ENCODE measurements at regions of chr14 and their contacts with region 1.

Region 1: DNA sequence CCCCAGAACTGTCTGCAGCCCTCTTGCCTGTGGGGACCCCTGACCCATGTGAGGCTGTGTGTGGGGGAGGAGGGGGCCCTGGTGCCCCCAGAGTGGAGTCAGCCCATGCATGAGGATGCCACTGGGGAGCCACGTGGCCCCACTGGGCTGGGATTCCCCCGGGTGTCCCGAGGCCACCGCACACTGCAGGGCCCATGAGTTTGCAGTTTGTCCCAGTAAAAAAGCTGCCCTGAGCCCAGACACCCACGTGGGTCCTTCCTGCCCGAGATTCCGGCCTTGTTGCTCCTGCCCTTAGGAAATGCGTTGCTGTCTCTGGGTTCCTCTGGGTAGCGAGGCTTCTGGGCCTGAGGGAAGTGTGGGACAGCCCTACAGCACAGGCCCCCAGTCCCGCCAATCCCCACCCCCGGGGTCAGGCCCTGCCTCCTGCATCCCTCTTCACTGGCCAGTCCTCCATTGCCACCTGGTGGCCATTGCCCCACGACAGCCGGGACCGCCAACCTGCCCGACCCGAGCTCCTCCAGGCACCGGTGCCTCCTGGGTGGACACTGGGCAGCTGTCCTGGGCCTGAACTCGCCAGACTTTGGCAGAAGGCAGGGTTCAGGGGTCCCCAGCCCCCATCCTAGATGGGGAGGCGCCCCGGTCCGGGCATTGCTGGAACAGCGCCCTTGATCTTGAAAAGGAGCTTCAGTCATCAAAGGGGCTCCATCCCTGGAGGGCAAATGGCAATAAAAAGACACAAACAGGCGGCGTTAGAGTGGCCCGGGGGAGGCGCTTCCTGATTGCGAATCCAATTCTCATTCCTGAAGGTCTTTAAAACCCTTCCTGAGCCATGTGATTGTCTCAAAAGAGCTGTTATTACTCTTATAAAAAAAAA is 15.6 kb upstream of the C14orf180 start:
- DNase-seq: peak; percentile 98
- H3K4me3 ChIP-seq: no peak overlapping the region; a peak in 1 of 4 replicates
- H3K27ac ChIP-seq: peak overlapping the region in 1 of 2 experiments; percentile 71; a peak in 2 of 4 replicates
- H3K4me1 ChIP-seq: peaks cover 0 to 65% of the 10 kb centered on the region in 2 experiments; a peak in 1 of 4 replicates
- H3K27me3 ChIP-seq: no peaks in the 10 kb centered on the region
- CTCF ChIP-seq: peak; percentile 78
- EP300 ChIP-seq: no peak
- RAD21 ChIP-seq: peak; percentile 94

Region 2: GRCh38 chr14:104094709-104095438 is 469.1 kb before region 1 on chr14:
- CTCF ChIA-PET with region 1: interaction called, 32 read pairs
- POLR2A ChIA-PET with region 1: no interaction called
- DNase-seq: peak; percentile 92
- H3K4me3 ChIP-seq: no peak overlapping the region; a peak in 1 of 4 replicates
- H3K27ac ChIP-seq: no peak overlapping the region; a peak in 1 of 4 replicates
- H3K4me1 ChIP-seq: peaks cover 0 to 13% of the 10 kb centered on the region in 2 experiments; a peak in 1 of 4 replicates
- H3K27me3 ChIP-seq: no peaks in the 10 kb centered on the region
- CTCF ChIP-seq: peak; percentile 82
- EP300 ChIP-seq: no peak
- RAD21 ChIP-seq: peak; percentile 69

Region 3: GRCh38 chr14:104150136-104151027 is 413.6 kb before region 1 on chr14:
- CTCF ChIA-PET with region 1: interaction called, 33 read pairs
- POLR2A ChIA-PET with region 1: no interaction called
- DNase-seq: peak; percentile 89
- H3K4me3 ChIP-seq: no peak overlapping the region; a peak in 1 of 4 replicates
- H3K27ac ChIP-seq: peak overlapping the region; percentile 47 to 99; a peak in 3 of 4 replicates
- H3K4me1 ChIP-seq: peaks cover 16 to 94% of the 10 kb centered on the region in 2 experiments; a peak in 2 of 4 replicates
- H3K27me3 ChIP-seq: no peaks in the 10 kb centered on the region
- CTCF ChIP-seq: peak; percentile 50
- EP300 ChIP-seq: peak; percentile 32 to 93; a peak in 3 of 4 replicates
- RAD21 ChIP-seq: no peak

Region 4: GRCh38 chr14:104370256-104370870 is 193.6 kb before region 1 on chr14:
- CTCF ChIA-PET with region 1: interaction called, 26 read pairs
- POLR2A ChIA-PET with region 1: no interaction called
- DNase-seq: peak; percentile 80
- H3K4me3 ChIP-seq: no peak overlapping the region
- H3K27ac ChIP-seq: no peak overlapping the region; a peak in 1 of 4 replicates
- H3K4me1 ChIP-seq: peaks cover 0 to 33% of the 10 kb centered on the region in 2 experiments; a peak in 1 of 4 replicates
- H3K27me3 ChIP-seq: no peaks in the 10 kb centered on the region
- CTCF ChIP-seq: no peak
- EP300 ChIP-seq: no peak
- RAD21 ChIP-seq: peak; percentile 79

Region 5: GRCh38 chr14:104510794-104511611 is 53.0 kb before region 1 on chr14:
- CTCF ChIA-PET with region 1: interaction called, 17 read pairs
- POLR2A ChIA-PET with region 1: no interaction called
- DNase-seq: peak; percentile 71
- H3K4me3 ChIP-seq: no peak overlapping the region
- H3K27ac ChIP-seq: peak overlapping the region in 1 of 2 experiments; percentile 87; a peak in 2 of 4 replicates
- H3K4me1 ChIP-seq: peaks cover 0 to 32% of the 10 kb centered on the region in 2 experiments; a peak in 1 of 4 replicates
- H3K27me3 ChIP-seq: no peaks in the 10 kb centered on the region
- CTCF ChIP-seq: no peak
- EP300 ChIP-seq: no peak
- RAD21 ChIP-seq: no peak

Region 6: DNA sequence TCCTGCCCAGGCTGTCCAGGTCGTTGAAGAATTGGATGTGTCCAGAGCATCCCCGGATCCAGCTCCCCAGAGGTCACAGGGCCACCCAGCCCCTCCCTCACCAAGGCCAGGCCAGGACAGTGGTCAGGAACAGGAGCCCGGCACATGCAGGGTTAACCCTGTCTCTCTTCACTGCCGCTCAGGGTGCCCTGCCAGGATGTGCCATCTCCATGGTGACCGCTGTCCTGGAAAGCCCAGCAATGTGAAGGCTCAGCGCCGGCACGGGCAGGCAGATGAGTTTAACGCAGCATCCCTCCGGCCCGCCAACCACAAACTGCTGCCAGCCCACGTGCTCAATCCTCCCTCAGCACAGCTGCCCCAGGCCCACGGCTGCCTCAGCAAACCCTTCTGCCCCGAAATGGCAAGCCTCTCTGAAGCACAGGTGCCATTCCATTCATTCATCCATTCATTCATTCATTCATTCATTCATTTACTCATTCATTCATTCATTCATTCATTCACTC is 36.2 kb after region 1 on chr14:
- CTCF ChIA-PET with region 1: interaction called, 12 read pairs
- POLR2A ChIA-PET with region 1: no interaction called
- DNase-seq: peak; percentile 94
- H3K4me3 ChIP-seq: peak overlapping the region in 1 of 2 experiments; percentile 4; a peak in 1 of 4 replicates
- H3K27ac ChIP-seq: peak overlapping the region in 1 of 2 experiments; percentile 90; a peak in 2 of 4 replicates
- H3K4me1 ChIP-seq: peaks cover 0 to 86% of the 10 kb centered on the region in 2 experiments; a peak in 2 of 4 replicates
- H3K27me3 ChIP-seq: no peaks in the 10 kb centered on the region
- CTCF ChIP-seq: no peak
- EP300 ChIP-seq: peak in 1 of 2 experiments; percentile 67; a peak in 1 of 4 replicates
- RAD21 ChIP-seq: no peak

Region 7: DNA sequence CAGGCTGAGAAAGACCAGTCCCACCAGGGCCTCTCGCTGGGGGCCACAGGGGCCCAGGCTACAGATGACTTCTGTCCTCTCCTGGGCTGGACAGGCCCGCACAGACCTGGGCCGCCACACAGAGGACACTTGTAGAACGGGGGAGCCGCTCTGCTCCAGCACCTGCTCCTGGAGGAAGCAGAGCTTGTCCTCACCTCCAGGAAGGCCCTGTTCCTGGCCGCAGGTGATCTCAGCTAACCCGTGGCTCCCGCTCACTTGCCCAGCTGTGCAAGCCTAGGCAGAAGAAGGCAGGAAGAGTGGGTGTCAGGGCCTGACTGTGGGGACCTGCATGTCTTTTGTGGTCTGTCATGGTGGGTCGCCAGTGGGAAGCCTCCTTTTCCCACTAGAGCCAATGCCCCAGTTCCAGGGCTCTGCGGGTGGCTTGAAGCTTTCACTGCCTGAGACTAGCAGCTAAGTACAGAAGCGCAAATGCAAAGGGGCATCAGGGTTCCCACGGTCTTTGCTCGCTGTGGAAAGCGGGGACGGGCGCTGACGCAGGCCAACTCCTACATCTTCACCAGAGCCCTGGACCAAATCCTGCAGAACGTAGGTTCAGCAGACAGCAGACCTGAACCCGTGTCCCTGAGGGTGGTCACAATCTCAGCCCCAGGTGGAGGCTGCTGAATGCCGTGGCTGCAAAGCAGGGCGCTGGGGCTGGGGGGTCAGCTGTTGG is 292.3 kb after region 1 on chr14:
- CTCF ChIA-PET with region 1: no interaction called
- POLR2A ChIA-PET with region 1: no interaction called
- DNase-seq: no peak
- H3K4me3 ChIP-seq: no peak overlapping the region
- H3K27ac ChIP-seq: no peak overlapping the region
- H3K4me1 ChIP-seq: no peaks in the 10 kb centered on the region
- H3K27me3 ChIP-seq: peaks cover 25% of the 10 kb centered on the region; the same call in 1 of the 2 replicates
- CTCF ChIP-seq: no peak
- EP300 ChIP-seq: no peak
- RAD21 ChIP-seq: no peak

Measured in SK-N-SH (cell line).